PC-3 (cell line): ENCODE measurements at regions of chr9 and their contacts with region 1.

Region 1: DNA sequence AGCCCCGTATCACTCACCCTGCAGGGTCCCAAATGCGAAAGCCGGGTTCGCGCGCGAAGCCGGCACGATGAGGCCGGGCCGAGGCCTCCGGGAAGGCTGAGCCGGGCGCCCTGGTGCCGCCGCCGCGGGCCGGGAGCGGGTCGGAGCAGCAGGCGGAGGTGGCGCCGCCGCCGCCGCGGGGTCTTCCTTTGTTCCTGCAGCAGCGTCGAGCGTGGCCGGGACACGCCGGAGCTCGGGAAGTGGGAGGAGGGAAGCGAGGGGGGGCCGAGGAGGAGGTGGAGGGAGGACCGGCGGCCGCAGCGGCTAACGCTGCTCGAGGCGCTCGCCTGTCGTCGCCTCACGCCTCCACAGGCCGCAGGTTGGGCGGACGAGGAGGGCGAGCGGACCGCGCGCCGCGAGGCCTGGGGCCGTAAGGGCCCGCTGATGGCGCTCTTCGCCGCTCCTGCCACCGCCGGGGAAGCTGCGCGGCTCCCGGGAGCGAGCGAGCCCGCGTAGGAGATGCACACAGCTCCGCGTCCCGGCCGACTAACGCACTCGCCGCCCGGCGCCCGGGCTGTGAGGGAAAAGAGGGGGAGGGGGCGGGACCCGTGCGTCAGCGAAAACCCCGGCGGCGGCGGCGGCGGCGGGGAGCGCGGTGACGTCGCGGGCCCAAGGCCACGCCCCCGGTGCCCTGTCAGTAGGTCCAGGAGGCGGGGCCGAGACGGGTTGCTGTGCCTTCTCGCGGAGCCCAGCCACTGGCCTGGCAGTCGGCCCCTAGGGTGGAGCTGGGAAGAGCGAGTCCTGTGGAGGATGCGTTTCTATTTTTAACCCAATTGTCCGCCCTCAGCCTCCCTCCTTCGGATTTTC is at the start of gene ZFAND5:
- DNase-seq: peak; percentile 93
- ATAC-seq: peak; percentile 85
- H3K4me3 ChIP-seq: peak within 1 kb of the TSS; percentile 98
- H3K27ac ChIP-seq: peak within 1 kb of the TSS; percentile 98
- H3K4me1 ChIP-seq: peaks cover 19% of the 10 kb centered on the region; the same call in 1 of the 2 replicates
- H3K27me3 ChIP-seq: no peaks in the 10 kb centered on the region
- CTCF ChIP-seq: no peak
- total RNA-seq, gene ZFAND5: 84.1 and 88.8 TPM in 2 replicates

Region 2: GRCh38 chr9:71703172-71703872 is 661.6 kb before region 1 on chr9:
- CTCF ChIA-PET with region 1: no interaction called
- POLR2A ChIA-PET with region 1: no interaction called
- intact Hi-C with region 1: no loop called
- DNase-seq: no peak
- ATAC-seq: no peak
- H3K4me3 ChIP-seq: no peak overlapping the region
- H3K27ac ChIP-seq: no peak overlapping the region
- H3K4me1 ChIP-seq: no peaks in the 10 kb centered on the region
- H3K27me3 ChIP-seq: no peaks in the 10 kb centered on the region
- CTCF ChIP-seq: no peak

Region 3: GRCh38 chr9:72351538-72352453 is 13.1 kb before region 1 on chr9:
- CTCF ChIA-PET with region 1: no interaction called
- POLR2A ChIA-PET with region 1: no interaction called
- intact Hi-C with region 1: loop called (anchors 2 kb)
- DNase-seq: peak; percentile 84
- ATAC-seq: peak; percentile 99
- H3K4me3 ChIP-seq: no peak overlapping the region
- H3K27ac ChIP-seq: peak overlapping the region; percentile 39
- H3K4me1 ChIP-seq: peaks cover 20% of the 10 kb centered on the region
- H3K27me3 ChIP-seq: no peaks in the 10 kb centered on the region
- CTCF ChIP-seq: no peak

Region 4: GRCh38 chr9:72443855-72444254 is 79.0 kb after region 1 on chr9:
- CTCF ChIA-PET with region 1: no interaction called
- POLR2A ChIA-PET with region 1: no interaction called
- intact Hi-C with region 1: loop called (anchors 1 kb)
- DNase-seq: peak; percentile 57
- ATAC-seq: peak; percentile 41
- H3K4me3 ChIP-seq: no peak overlapping the region
- H3K27ac ChIP-seq: peak overlapping the region; percentile 83
- H3K4me1 ChIP-seq: peaks cover 55% of the 10 kb centered on the region
- H3K27me3 ChIP-seq: no peaks in the 10 kb centered on the region
- CTCF ChIP-seq: no peak

Region 5: GRCh38 chr9:72577212-72577753 is 212.4 kb after region 1 on chr9:
- CTCF ChIA-PET with region 1: no interaction called
- POLR2A ChIA-PET with region 1: interaction called, 5 read pairs
- intact Hi-C with region 1: loop called (anchors 2 kb)
- DNase-seq: peak; percentile 93
- ATAC-seq: peak; percentile 27
- H3K4me3 ChIP-seq: peak overlapping the region; percentile 33
- H3K27ac ChIP-seq: peak overlapping the region; percentile 94
- H3K4me1 ChIP-seq: peaks cover 71% of the 10 kb centered on the region
- H3K27me3 ChIP-seq: no peaks in the 10 kb centered on the region
- CTCF ChIP-seq: no peak

Region 6: GRCh38 chr9:72592502-72593403 is 227.9 kb after region 1 on chr9:
- CTCF ChIA-PET with region 1: no interaction called
- POLR2A ChIA-PET with region 1: no interaction called
- intact Hi-C with region 1: loop called (anchors 1 kb)
- DNase-seq: peak; percentile 66
- ATAC-seq: peak; percentile 75
- H3K4me3 ChIP-seq: no peak overlapping the region
- H3K27ac ChIP-seq: no peak overlapping the region
- H3K4me1 ChIP-seq: peaks cover 4% of the 10 kb centered on the region; the same call in 1 of the 2 replicates
- H3K27me3 ChIP-seq: no peaks in the 10 kb centered on the region
- CTCF ChIP-seq: peak; percentile 81